Activated CD4-positive, alpha-beta memory T cell treated with anti-CD3 and anti-CD28 coated beads, Interleukin-2, amount 10 ng/mL, durations not matched to agents 7 days and 5 days (primary cell): ENCODE measurements at regions of chr14 and their contacts with region 1.

Region 1: DNA sequence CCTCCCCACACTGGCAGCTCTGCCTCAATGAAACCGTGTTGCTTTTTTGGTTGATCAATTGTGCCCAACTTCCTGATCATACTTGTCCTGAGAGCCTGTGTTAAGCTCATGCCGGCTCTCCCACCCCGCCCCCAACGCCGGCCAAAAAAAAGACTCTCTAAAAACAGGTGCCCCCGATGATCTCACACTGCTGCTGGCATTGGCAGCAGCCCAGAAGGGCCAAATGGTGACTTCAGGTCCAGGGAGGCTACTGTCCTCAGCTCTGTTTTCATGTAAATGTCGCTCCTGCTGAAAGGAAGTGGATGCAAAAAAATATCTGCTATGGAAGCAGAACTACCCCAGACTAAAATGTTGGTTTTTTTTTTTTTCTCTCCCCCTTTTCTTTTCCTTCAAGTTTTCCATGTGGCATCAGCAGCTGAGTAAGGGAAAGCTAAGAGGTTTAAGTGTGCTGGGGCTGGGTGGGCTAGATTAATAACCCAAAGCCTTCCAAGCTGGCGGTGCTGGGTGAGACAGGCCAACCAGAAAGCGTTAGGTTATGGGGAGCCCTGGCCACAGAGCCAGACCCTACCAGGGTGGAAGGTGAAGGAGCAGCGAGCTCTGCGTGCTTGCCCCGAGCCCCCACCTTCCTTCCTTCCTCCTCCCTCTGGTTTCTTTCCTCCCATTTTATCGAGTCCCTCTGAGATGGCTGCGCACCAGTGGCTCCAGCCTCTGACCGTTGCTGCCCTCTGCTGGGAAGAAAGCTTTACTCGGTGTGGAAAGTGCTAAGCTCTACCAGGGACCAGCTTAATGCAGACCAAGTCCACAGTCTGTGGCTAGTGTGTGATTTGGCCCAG is 396.1 kb downstream of the NRXN3 start:
- DNase-seq: peak; percentile 60
- H3K4me3 Mint-ChIP-seq: no peak overlapping the region
- H3K27ac Mint-ChIP-seq: no peak overlapping the region
- H3K4me1 Mint-ChIP-seq: no peaks in the 10 kb centered on the region
- H3K27me3 Mint-ChIP-seq: no peaks in the 10 kb centered on the region

Region 2: GRCh38 chr14:78581229-78581628 is 15.0 kb after region 1 on chr14:
- CTCF ChIA-PET with region 1: interaction called, 10 read pairs
- POLR2A ChIA-PET with region 1: no interaction called
- DNase-seq: no peak
- H3K4me3 Mint-ChIP-seq: no peak overlapping the region
- H3K27ac Mint-ChIP-seq: no peak overlapping the region
- H3K4me1 Mint-ChIP-seq: no peaks in the 10 kb centered on the region
- H3K27me3 Mint-ChIP-seq: no peaks in the 10 kb centered on the region

Region 3: DNA sequence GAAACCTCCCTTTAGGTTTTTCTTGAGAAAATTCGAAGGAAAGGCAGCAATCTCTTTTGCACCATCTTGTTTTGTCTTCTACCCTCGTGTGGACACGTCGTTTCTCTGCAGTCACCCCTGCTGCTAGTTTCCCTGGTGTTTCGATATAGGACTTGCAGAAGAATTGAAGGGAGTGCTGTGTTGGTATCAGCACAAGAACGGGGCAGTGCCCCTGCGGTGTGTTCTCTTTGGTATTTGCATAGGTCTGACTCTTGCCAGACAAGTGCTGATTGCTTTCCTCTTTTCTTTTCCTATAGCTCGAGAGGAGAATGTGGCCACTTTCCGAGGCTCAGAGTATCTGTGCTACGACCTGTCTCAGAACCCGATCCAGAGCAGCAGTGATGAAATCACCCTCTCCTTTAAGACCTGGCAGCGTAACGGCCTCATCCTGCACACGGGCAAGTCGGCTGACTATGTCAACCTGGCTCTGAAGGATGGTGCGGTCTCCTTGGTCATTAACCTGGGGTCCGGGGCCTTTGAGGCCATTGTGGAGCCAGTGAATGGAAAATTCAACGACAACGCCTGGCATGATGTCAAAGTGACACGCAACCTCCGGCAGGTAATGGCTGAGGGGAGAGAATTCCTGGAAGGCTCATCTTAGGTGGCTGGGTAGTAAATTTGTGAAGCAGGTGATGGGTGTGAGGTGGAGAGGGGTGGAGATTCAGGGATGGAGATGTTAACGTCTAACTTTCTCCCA is 78.8 kb after region 1 on chr14:
- CTCF ChIA-PET with region 1: no interaction called
- POLR2A ChIA-PET with region 1: no interaction called
- DNase-seq: no peak
- H3K4me3 Mint-ChIP-seq: no peak overlapping the region
- H3K27ac Mint-ChIP-seq: no peak overlapping the region
- H3K4me1 Mint-ChIP-seq: no peaks in the 10 kb centered on the region
- H3K27me3 Mint-ChIP-seq: peaks cover 2% of the 10 kb centered on the region